Right cardiac atrium (tissue), 5 donors: ENCODE measurements at regions of chr14 and their contacts with region 1.

Region 1: GRCh38 chr14:102516531-102517415 is 7.2 kb upstream of the ANKRD9 start:
- DNase-seq: peak in 2 of 3 donors; percentile 86 to 88
- ATAC-seq: peak; percentile 69 to 75
- H3K4me3 ChIP-seq: peak overlapping the region; percentile 78
- H3K27ac ChIP-seq: no peak overlapping the region
- H3K4me1 ChIP-seq: no peaks in the 10 kb centered on the region
- H3K27me3 ChIP-seq: no peaks in the 10 kb centered on the region

Region 2: GRCh38 chr14:102437997-102438915 is 78.5 kb before region 1 on chr14:
- intact Hi-C with region 1: loop called (anchors 1 to 2 kb)
- DNase-seq: peak; percentile 90 to 95 (median 95)
- ATAC-seq: peak; percentile 93 to 95
- H3K4me3 ChIP-seq: no peak overlapping the region
- H3K27ac ChIP-seq: no peak overlapping the region
- H3K4me1 ChIP-seq: no peaks in the 10 kb centered on the region
- H3K27me3 ChIP-seq: no peaks in the 10 kb centered on the region